ENCODE measurements at regions of chr1 and their contacts with region 1.

Region 1: GRCh38 chr1:100459358-100460114 is 78.4 kb upstream of the GPR88 start:
- DNase-seq: peak; percentile 60 to 77 (median 66)
- ATAC-seq: peak; percentile 61 to 92 (median 88)
- H3K4me3 ChIP-seq: no peak overlapping the region
- H3K27ac ChIP-seq: peak overlapping the region in 2 of 12 donors; percentile 27 to 34
- H3K4me1 ChIP-seq: peaks cover 0 to 18% (median 6%) of the 10 kb centered on the region in 12 donors
- H3K27me3 ChIP-seq: no peaks in the 10 kb centered on the region
- CTCF ChIP-seq: peak; percentile 71 to 94 (median 84)
- POLR2A ChIP-seq: no peak

Region 2: DNA sequence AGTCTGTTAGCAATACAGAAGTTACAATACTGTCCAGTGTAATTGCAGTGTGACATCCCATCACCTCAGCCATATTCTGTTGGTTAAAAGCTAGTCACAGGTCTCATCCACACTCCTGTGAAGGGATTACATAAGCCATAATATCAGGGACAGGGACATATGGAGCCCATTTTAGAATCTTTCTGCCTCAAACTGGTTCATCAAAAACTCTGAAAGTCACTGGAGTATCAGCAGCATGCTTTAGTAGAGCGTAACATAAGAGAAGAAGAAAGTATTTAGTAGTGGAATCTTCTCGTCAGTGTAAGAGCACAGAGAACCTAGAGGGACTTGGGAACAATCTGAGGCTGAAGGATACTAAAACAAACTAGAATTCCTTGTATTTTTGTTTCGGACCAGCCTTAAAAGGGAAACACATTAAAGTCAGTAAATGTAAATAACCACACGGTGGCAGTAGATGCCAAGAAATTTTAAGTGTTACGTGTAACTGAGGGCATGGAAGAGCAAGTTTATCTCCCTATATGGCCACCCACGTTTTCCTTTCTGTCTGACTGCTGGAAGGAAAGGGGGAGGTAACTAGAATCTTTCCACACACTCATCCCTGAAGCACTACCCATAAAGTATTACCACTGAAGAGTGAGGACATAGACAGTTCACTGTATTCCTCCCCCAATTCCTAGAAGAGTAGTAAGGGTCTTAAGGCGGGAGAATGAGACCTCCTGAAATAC is 651.0 kb before region 1 on chr1:
- intact Hi-C with region 1: loop called in 9 of 10 experiments (anchors 2 to 10 kb)
- DNase-seq: peak in 2 of 5 donors; percentile 22 to 28
- ATAC-seq: peak; percentile 79 to 96 (median 90)
- H3K4me3 ChIP-seq: peak overlapping the region in 4 of 12 donors; percentile 3 to 18 (median 12)
- H3K27ac ChIP-seq: peak overlapping the region in 3 of 12 donors; percentile 20 to 84 (median 58)
- H3K4me1 ChIP-seq: peaks cover 0 to 10% (median 0%) of the 10 kb centered on the region in 12 donors
- H3K27me3 ChIP-seq: no peaks in the 10 kb centered on the region
- CTCF ChIP-seq: peak; percentile 54 to 75 (median 65)
- POLR2A ChIP-seq: no peak

Region 3: DNA sequence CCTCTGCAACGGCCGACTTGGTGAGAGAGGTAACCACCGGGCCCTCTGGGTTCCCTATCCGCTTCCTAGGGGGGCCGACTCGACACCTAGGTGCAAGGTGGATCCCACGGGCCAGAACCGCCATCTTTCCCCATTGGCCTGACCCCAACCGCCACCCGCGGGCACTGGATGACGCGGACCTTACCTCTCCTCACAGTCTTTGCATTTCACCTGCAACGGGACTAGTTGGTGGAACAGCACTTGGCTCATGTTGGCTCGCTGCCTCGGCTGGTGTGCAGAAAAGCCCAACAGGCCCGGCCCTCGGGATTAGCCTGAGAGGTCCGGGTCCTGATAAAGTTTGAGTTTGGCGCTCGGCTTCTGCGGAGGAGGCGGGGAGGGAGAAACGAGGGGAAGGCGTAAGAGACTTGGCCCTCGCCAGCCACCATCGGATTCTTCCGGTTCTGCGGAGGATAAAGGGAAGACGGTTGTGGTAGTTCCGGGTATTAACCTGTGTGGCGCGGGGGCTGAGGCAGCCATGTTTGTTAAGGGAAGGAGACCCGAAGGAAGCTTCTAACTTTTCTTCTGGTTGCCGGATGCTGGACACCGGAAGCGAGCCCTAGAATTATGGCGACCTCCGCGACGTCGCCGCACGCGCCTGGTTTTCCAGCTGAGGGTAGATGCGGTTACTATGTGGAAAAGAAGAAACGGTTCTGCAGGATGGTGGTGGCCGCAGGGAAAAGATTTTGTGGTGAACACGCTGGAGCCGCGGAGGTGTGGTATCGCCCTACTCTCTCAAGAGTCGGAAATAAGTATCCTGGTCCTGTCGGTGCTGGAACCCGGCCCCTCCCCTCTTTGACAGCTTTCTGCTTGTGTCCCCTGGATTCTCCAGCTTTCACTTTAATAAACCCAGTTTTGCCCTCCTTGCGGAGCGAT is 326.7 kb before region 1 on chr1 and contains the starts of genes SASS6 and TRMT13:
- intact Hi-C with region 1: loop called in 2 of 10 experiments (anchors 10 kb)
- DNase-seq: peak; percentile 96 to 98 (median 97)
- ATAC-seq: peak; percentile 99
- H3K4me3 ChIP-seq: peak within 1 kb of the TSS; percentile 56 to 88 (median 78)
- H3K27ac ChIP-seq: peak within 1 kb of the TSS in 11 of 12 donors; percentile 46 to 82 (median 66)
- H3K4me1 ChIP-seq: peaks cover 0 to 32% (median 19%) of the 10 kb centered on the region in 12 donors
- H3K27me3 ChIP-seq: no peaks in the 10 kb centered on the region
- CTCF ChIP-seq: peak in 2 of 12 donors; percentile 9 to 13
- POLR2A ChIP-seq: peak in 1 of 2 donors; percentile 30
- total RNA-seq, gene SASS6: 1.5 to 2.2 (median 1.8) TPM
- total RNA-seq, gene TRMT13: 2.0 to 8.1 (median 5.9) TPM

Region 4: DNA sequence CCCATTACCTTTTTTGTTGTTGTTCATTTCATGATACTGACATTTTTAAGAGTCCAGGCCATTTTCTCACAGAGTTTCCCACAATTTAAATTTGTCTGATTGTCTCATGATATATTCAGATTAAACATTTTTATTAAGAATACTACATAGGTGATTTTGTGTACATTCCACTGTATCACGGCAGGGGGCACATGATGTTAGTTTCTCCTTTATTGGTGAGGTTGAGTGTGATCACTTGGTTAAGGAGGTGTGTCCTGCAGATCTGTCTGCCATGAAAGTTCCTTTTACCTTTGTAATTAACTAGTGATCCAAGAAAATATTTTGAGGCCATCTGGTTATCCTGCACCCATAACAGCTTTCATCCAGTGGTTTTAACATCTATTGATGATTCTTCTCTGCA is 181.7 kb before region 1 on chr1:
- intact Hi-C with region 1: loop called in 5 of 10 experiments (anchors 10 kb)
- DNase-seq: no peak
- ATAC-seq: no peak
- H3K4me3 ChIP-seq: no peak overlapping the region
- H3K27ac ChIP-seq: no peak overlapping the region
- H3K4me1 ChIP-seq: peaks cover 0 to 14% (median 3%) of the 10 kb centered on the region in 12 donors
- H3K27me3 ChIP-seq: no peaks in the 10 kb centered on the region
- CTCF ChIP-seq: no peak
- POLR2A ChIP-seq: no peak

Region 5: DNA sequence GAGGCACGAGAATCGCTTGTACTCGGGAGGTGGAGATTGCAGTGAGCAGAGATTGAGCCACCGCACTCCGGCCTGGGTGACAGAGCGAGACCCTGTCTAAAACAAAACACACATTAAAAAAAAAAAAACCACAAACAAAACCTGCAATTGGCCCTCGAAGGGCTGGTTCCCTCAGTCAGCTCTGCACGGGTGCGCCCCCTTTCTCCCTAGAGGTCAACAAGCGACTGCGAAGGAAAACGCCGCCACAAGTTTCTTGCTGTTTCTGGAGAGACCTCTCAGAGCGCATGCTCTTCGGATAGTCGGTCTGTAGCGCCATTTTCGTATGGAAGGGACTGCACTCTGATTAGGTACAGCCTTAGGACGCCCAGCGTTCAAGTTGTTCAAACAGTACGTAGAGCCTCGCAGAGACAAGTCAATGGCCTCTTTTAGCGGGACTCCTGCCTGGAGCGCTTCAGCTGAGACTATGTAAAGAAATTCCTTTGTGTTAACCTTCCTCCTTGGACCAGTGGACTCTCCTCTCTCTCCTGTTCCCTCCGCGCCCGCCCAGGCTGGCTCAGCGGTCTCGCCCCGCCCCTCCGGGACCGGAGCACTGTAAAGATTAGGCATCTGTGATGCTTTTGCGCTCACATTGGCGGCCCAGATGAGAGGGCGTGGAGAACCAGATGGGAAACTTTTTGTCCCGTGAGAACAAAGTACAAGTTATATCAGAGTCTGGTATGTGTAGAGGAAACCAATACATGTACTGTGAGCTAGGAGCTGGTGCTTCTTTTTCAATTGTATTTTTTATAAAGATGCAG is 108.2 kb before region 1 on chr1:
- intact Hi-C with region 1: loop called in 5 of 10 experiments (anchors 1 to 10 kb)
- DNase-seq: peak; percentile 85 to 91 (median 88)
- ATAC-seq: peak; percentile 80 to 85 (median 82)
- H3K4me3 ChIP-seq: peak overlapping the region; percentile 66 to 99 (median 86)
- H3K27ac ChIP-seq: peak overlapping the region; percentile 22 to 98 (median 92)
- H3K4me1 ChIP-seq: peaks cover 0 to 35% (median 20%) of the 10 kb centered on the region in 12 donors
- H3K27me3 ChIP-seq: no peaks in the 10 kb centered on the region
- CTCF ChIP-seq: peak in 10 of 12 donors; percentile 20 to 61 (median 42)
- POLR2A ChIP-seq: peak in 1 of 2 donors; percentile 44

Region 6: GRCh38 chr1:100414693-100415497 is 44.6 kb before region 1 on chr1:
- intact Hi-C with region 1: no loop called
- DNase-seq: no peak
- ATAC-seq: no peak
- H3K4me3 ChIP-seq: no peak overlapping the region
- H3K27ac ChIP-seq: peak overlapping the region in 1 of 12 donors; percentile 47
- H3K4me1 ChIP-seq: peaks cover 0 to 42% (median 1%) of the 10 kb centered on the region in 12 donors
- H3K27me3 ChIP-seq: no peaks in the 10 kb centered on the region
- CTCF ChIP-seq: no peak
- POLR2A ChIP-seq: no peak

Region 7: DNA sequence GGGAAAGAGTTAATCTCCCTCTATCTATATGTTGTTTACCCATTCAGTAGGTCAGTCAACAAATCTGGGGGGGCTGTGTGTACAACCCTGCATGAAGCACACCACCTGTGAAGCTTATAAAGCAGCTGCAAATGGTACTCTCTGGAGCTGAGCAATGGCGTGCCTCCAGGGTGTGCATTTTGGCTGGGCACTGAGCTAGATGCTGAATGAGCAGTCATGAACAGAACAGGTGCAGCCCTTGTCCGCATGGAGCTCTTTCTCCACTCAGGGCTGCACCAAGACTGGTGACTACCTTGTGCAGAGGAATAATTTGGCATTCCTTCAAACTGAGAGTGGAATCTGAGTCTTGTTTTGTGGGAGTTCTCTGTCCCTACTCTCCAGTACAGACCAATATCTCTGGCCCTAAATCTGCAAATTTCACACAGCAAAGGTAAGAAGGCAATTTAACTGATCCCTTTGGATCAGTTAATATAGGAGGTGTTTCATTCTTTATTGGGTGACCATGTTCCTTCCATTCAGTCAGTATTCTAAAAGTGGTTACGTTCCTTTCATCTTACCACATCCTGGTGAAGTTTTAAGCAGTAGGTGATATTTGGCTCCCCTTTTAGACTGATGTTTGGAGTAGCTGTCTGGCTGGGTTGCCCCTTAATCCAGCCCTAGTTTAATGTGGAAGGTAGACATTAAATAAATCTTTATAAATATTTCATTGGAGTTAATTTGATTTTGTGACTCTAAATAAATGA is 154.5 kb after region 1 on chr1:
- intact Hi-C with region 1: loop called in 5 of 10 experiments (anchors 5 to 10 kb)
- DNase-seq: no peak
- ATAC-seq: no peak
- H3K4me3 ChIP-seq: no peak overlapping the region
- H3K27ac ChIP-seq: no peak overlapping the region
- H3K4me1 ChIP-seq: no peaks in the 10 kb centered on the region
- H3K27me3 ChIP-seq: no peaks in the 10 kb centered on the region
- CTCF ChIP-seq: no peak
- POLR2A ChIP-seq: no peak